CD8-positive, alpha-beta T cell (primary cell): ENCODE measurements at regions of chrX and their contacts with region 1.

Region 1: GRCh38 chrX:55357236-55357635 is 92.5 kb upstream of the PAGE3 start:
- DNase-seq: peak in 2 of 9 experiments; percentile 20 to 54
- ATAC-seq: peak; percentile 38
- H3K4me3 ChIP-seq: no peak overlapping the region
- H3K4me3 Mint-ChIP-seq: no peak overlapping the region
- H3K27ac ChIP-seq: no peak overlapping the region
- H3K27ac Mint-ChIP-seq: peak overlapping the region; percentile 75
- H3K4me1 ChIP-seq: peaks cover 17% of the 10 kb centered on the region
- H3K4me1 Mint-ChIP-seq: peaks cover 12% of the 10 kb centered on the region
- H3K27me3 ChIP-seq: no peaks in the 10 kb centered on the region
- H3K27me3 Mint-ChIP-seq: no peaks in the 10 kb centered on the region
- CTCF ChIP-seq: no peak

Region 2: GRCh38 chrX:55290963-55291362 is 66.3 kb before region 1 on chrX:
- CTCF ChIA-PET with region 1: no interaction called
- POLR2A ChIA-PET with region 1: no interaction called
- intact Hi-C with region 1: loop called in 1 of 2 experiments (anchors 10 kb)
- DNase-seq: no peak
- ATAC-seq: no peak
- H3K4me3 ChIP-seq: no peak overlapping the region
- H3K4me3 Mint-ChIP-seq: no peak overlapping the region
- H3K27ac ChIP-seq: no peak overlapping the region
- H3K27ac Mint-ChIP-seq: no peak overlapping the region
- H3K4me1 ChIP-seq: no peaks in the 10 kb centered on the region
- H3K4me1 Mint-ChIP-seq: no peaks in the 10 kb centered on the region
- H3K27me3 ChIP-seq: no peaks in the 10 kb centered on the region
- H3K27me3 Mint-ChIP-seq: no peaks in the 10 kb centered on the region
- CTCF ChIP-seq: no peak

Region 3: GRCh38 chrX:55340896-55341433 is 16.3 kb before region 1 on chrX:
- CTCF ChIA-PET with region 1: no interaction called
- POLR2A ChIA-PET with region 1: no interaction called
- intact Hi-C with region 1: no loop called
- DNase-seq: no peak
- ATAC-seq: no peak
- H3K4me3 ChIP-seq: no peak overlapping the region
- H3K4me3 Mint-ChIP-seq: no peak overlapping the region
- H3K27ac ChIP-seq: no peak overlapping the region
- H3K27ac Mint-ChIP-seq: no peak overlapping the region
- H3K4me1 ChIP-seq: peaks cover 6% of the 10 kb centered on the region
- H3K4me1 Mint-ChIP-seq: peaks cover 10% of the 10 kb centered on the region
- H3K27me3 ChIP-seq: no peaks in the 10 kb centered on the region
- H3K27me3 Mint-ChIP-seq: peaks cover 3% of the 10 kb centered on the region
- CTCF ChIP-seq: no peak